Activated T-helper 1 cell treated with anti-CD3 and anti-CD28 coated beads, Interleukin-12 subunit alpha, Interleukin-12 subunit beta, Interleukin-2, Interleukin-4 antibody, amounts not matched to agents 30 ng/mL and 10 ng/mL and 1 ng/mL, durations not matched to agents 14 hours and 24 hours and 36 hours (primary cell): ENCODE measurements at regions of chr11 and their contacts with region 1.

Region 1: GRCh38 chr11:102495161-102496042 is 35.1 kb downstream of the MMP7 start:
- DNase-seq: peak; percentile 18
- H3K4me3 Mint-ChIP-seq: no peak overlapping the region
- H3K27ac Mint-ChIP-seq: no peak overlapping the region
- H3K4me1 Mint-ChIP-seq: peaks cover 30% of the 10 kb centered on the region
- H3K27me3 Mint-ChIP-seq: peaks cover 2% of the 10 kb centered on the region

Region 2: DNA sequence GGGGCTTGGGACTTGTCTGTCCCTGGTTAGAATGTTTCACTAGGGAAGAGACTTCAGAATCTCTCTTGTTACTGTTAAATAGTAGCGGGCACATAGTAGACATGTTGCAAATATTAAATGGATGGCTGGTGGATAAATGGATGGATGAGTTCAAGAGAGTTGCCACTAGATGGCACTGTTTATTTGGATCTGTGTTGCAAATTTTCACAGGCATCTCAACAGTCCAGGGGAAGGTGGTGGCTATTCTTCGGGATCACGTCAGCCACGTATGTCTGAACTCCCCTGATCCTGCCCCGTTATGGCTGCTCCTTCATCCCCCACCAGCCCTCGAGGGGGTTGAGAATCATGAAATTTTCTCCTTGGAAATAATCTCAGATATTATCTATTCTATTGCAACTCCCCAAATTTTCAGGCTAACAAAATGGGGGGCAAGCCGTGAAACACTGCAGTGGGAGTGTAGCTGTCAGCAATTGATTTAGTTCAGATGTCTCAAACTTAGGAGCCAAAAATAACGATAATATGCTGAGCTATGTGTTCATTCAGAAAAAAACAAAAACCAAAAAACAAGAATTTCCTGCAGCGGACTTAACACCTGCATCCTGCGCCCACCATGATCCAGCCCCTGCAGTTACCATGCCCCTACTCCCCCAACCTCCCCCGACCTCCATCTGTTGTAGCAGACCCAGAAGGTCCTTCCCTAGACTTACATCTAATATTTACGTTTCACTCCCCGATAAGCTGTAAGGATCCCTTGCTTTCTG is 207.3 kb before region 1 on chr11:
- intact Hi-C with region 1: loop called (anchors 1 kb)
- DNase-seq: peak; percentile 24
- H3K4me3 Mint-ChIP-seq: peak overlapping the region; percentile 8
- H3K27ac Mint-ChIP-seq: peak overlapping the region; percentile 35
- H3K4me1 Mint-ChIP-seq: peaks cover 39% of the 10 kb centered on the region
- H3K27me3 Mint-ChIP-seq: no peaks in the 10 kb centered on the region

Region 3: GRCh38 chr11:102367364-102367763 is 128.0 kb before region 1 on chr11:
- intact Hi-C with region 1: loop called (anchors 1 kb)
- DNase-seq: no peak
- H3K4me3 Mint-ChIP-seq: no peak overlapping the region
- H3K27ac Mint-ChIP-seq: no peak overlapping the region
- H3K4me1 Mint-ChIP-seq: peaks cover 26% of the 10 kb centered on the region
- H3K27me3 Mint-ChIP-seq: no peaks in the 10 kb centered on the region

Region 4: DNA sequence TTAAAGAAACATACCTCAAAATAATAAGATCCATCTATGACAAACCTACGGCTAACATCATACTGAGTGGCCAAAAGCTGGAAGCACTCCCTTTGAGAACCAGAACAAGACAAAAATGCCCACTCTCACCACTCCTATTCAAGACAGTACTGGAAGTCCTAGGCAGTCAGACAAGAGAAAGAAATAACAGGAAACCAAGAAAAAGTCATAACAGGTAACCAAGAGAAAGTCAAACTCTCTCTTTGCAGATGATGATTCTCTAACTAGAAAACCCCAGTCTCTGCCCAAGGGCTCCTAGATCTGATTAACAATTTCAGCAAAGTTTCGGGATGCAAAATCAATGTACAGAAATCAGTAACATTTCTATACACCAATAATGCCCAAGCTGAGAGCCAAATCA is 78.4 kb before region 1 on chr11:
- intact Hi-C with region 1: loop called (anchors 2 kb)
- DNase-seq: no peak
- H3K4me3 Mint-ChIP-seq: peak overlapping the region; percentile 26
- H3K27ac Mint-ChIP-seq: peak overlapping the region; percentile 67
- H3K4me1 Mint-ChIP-seq: peaks cover 84% of the 10 kb centered on the region
- H3K27me3 Mint-ChIP-seq: no peaks in the 10 kb centered on the region

Region 5: DNA sequence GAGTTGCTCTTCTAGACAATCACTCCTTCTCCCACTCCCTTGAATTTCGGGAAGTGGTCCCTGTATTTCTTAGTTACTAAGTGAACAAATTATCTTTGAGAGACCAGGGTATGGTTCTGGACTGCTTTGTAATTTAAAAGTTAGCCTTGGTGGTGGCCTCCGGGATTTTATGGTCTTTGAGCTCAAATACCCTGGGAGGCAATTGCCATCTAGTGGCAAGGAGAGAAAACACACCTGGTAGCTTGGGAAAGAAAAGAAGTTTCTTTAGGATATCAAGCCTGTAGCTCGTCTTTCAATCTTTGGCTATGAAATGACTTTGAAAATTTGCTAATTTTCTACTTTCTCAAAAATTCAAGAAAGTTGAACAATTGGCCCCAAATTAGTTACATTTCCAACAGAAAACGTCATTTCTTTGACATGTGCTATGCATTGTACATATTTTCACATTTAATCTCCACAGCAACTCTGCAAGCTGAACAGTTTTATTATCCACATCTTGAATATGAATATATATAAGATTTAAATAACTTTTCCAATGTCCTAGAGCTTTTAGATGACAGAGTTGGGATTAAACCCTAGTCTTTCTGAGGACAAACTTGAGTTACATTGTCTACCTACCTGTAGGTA is 171.0 kb after region 1 on chr11:
- intact Hi-C with region 1: loop called (anchors 1 kb)
- DNase-seq: no peak
- H3K4me3 Mint-ChIP-seq: no peak overlapping the region
- H3K27ac Mint-ChIP-seq: no peak overlapping the region
- H3K4me1 Mint-ChIP-seq: no peaks in the 10 kb centered on the region
- H3K27me3 Mint-ChIP-seq: peaks cover 7% of the 10 kb centered on the region

Region 6: DNA sequence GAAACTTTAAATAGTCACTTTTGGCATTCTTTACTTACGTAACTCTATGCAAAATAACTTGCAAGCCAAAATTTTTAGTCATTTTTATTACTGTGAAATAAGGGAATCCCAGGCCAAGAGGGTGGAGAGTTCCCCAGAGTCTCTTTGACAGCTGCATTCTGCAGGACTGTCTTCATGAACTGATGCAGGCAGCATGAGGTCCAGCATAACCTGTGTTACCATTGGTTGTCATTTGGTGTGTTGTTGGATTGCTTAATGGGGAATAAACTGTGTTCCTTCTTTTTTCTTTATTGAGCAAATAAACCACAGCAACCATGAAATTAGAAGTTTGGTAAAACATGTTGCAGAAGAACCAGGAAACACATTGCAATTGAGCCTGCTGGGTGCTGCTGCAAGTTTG is 185.5 kb after region 1 on chr11:
- intact Hi-C with region 1: no loop called
- DNase-seq: no peak
- H3K4me3 Mint-ChIP-seq: no peak overlapping the region
- H3K27ac Mint-ChIP-seq: no peak overlapping the region
- H3K4me1 Mint-ChIP-seq: no peaks in the 10 kb centered on the region
- H3K27me3 Mint-ChIP-seq: peaks cover 11% of the 10 kb centered on the region